ENCODE measurements at regions of chr2 and their contacts with region 1.

Region 1: GRCh38 chr2:196225213-196225612 is 53.8 kb upstream of the STK17B start:
- DNase-seq: no peak
- ATAC-seq: no peak
- H3K4me3 ChIP-seq: no peak overlapping the region
- H3K4me3 Mint-ChIP-seq: peak overlapping the region in 3 of 10 donors; percentile 17 to 37 (median 17)
- H3K27ac ChIP-seq: no peak overlapping the region
- H3K27ac Mint-ChIP-seq: peak overlapping the region in 7 of 9 donors; percentile 14 to 97 (median 50)
- H3K4me1 ChIP-seq: peaks cover 13 to 70% of the 10 kb centered on the region in 2 donors
- H3K4me1 Mint-ChIP-seq: peaks cover 48 to 88% (median 85%) of the 10 kb centered on the region in 7 donors
- H3K27me3 ChIP-seq: no peaks in the 10 kb centered on the region
- H3K27me3 Mint-ChIP-seq: no peaks in the 10 kb centered on the region

Region 2: GRCh38 chr2:196076778-196077568 is 148.2 kb before region 1 on chr2:
- CTCF ChIA-PET with region 1: interaction called, 110 read pairs
- POLR2A ChIA-PET with region 1: interaction called, 56 read pairs
- intact Hi-C with region 1: loop called in 1 of 2 experiments (anchors 1 kb)
- DNase-seq: no peak
- ATAC-seq: no peak
- H3K4me3 ChIP-seq: no peak overlapping the region
- H3K4me3 Mint-ChIP-seq: no peak overlapping the region
- H3K27ac ChIP-seq: no peak overlapping the region
- H3K27ac Mint-ChIP-seq: no peak overlapping the region
- H3K4me1 ChIP-seq: peaks cover 9 to 13% of the 10 kb centered on the region in 2 donors
- H3K4me1 Mint-ChIP-seq: peaks cover 10 to 34% (median 25%) of the 10 kb centered on the region in 7 donors
- H3K27me3 ChIP-seq: no peaks in the 10 kb centered on the region
- H3K27me3 Mint-ChIP-seq: no peaks in the 10 kb centered on the region

Region 3: GRCh38 chr2:196182439-196183171 is 42.6 kb before region 1 on chr2:
- CTCF ChIA-PET with region 1: interaction called, 22 read pairs
- POLR2A ChIA-PET with region 1: interaction called, 359 read pairs
- intact Hi-C with region 1: no loop called
- DNase-seq: peak in 1 of 9 donors; percentile 48
- ATAC-seq: peak; percentile 39
- H3K4me3 ChIP-seq: peak overlapping the region; percentile 34
- H3K4me3 Mint-ChIP-seq: peak overlapping the region; percentile 27 to 80 (median 70)
- H3K27ac ChIP-seq: peak overlapping the region; percentile 72
- H3K27ac Mint-ChIP-seq: peak overlapping the region; percentile 89 to 97 (median 93)
- H3K4me1 ChIP-seq: peaks cover 69 to 76% of the 10 kb centered on the region in 2 donors
- H3K4me1 Mint-ChIP-seq: peaks cover 55 to 98% (median 85%) of the 10 kb centered on the region in 7 donors
- H3K27me3 ChIP-seq: no peaks in the 10 kb centered on the region
- H3K27me3 Mint-ChIP-seq: no peaks in the 10 kb centered on the region

Region 4: DNA sequence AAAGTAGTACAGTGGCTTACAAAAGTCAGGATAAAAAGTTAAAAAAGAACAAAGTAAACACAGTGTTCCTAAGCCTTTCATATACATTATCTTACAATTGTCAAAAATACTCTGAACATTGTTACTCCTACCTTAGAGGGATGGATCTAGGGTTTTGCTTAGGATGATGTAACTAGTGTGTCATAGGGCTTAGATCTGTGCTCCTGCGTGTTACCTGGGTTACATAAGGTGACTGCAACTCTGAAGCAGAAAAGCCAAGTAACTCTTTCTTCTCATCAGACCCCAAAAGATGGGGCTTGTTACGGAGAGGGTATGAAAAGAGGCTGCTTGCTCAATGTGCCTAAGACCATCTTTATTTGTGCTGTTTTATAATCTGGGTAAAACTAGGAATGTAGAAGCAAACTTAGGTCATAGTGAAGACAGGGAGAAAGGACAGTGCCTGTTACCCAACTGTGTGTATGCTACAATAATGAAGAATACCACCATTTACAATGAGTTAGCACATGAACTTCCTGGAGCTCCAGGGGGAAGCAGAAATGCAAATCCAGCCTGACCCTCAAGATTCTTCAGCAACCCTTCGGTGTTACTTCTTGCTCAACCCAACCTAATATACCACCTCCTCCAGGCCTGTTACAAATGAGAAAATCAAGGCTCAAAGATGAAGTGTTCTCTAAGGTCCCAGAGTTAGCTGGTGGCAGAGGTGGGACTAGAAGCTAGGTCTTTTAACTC is 11.8 kb before region 1 on chr2:
- CTCF ChIA-PET with region 1: interaction called, 16 read pairs
- POLR2A ChIA-PET with region 1: interaction called, 28 read pairs
- intact Hi-C with region 1: loop called (anchors 1 kb)
- DNase-seq: peak in 7 of 9 donors; percentile 29 to 77 (median 58)
- ATAC-seq: peak; percentile 36
- H3K4me3 ChIP-seq: no peak overlapping the region
- H3K4me3 Mint-ChIP-seq: peak overlapping the region in 9 of 10 donors; percentile 0 to 94 (median 61)
- H3K27ac ChIP-seq: peak overlapping the region; percentile 78
- H3K27ac Mint-ChIP-seq: peak overlapping the region in 8 of 9 donors; percentile 95 to 100 (median 98)
- H3K4me1 ChIP-seq: peaks cover 14 to 57% of the 10 kb centered on the region in 2 donors
- H3K4me1 Mint-ChIP-seq: peaks cover 51 to 96% (median 94%) of the 10 kb centered on the region in 7 donors
- H3K27me3 ChIP-seq: no peaks in the 10 kb centered on the region
- H3K27me3 Mint-ChIP-seq: no peaks in the 10 kb centered on the region

Region 5: DNA sequence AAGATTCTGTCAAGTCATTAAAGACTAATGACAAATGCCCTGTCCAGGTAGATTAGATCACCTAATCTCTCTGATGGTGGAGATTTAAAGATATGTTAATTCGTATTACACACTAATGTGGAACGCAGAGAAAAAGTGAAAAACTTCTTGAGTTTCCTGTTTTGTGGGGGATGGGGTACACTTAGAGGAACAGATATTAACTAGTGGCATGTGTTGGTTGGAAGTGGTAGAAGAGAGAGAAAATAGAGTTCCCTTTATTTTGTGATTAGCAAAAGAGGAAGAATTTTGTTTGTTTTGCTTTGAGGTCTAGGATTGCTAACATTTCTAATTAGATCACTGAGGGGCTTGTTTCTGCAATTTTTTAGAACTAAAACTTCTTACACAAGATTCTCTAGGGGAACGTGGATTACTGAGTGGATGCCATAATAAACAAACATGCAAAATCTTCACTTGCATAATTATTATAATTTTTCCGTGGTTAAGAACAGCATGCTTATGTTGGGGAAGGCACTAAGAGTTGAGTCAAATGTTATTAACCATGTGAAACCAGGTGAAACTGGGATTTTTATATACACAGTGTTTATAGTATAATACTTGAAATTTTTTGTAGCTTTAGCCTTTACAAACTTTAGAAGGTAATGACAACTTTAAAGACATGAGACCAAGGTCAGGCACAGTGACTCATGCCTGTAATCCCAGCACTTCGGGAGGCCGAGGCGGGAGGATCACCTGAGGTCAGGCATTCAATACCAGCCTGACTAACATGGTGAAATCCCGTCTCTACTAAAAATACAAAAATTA is 43.5 kb after region 1 on chr2:
- CTCF ChIA-PET with region 1: interaction called, 6 read pairs
- POLR2A ChIA-PET with region 1: interaction called, 40 read pairs
- intact Hi-C with region 1: no loop called
- DNase-seq: peak in 5 of 9 donors; percentile 14 to 47 (median 30)
- ATAC-seq: peak; percentile 89
- H3K4me3 ChIP-seq: peak overlapping the region; percentile 33
- H3K4me3 Mint-ChIP-seq: peak overlapping the region; percentile 31 to 93 (median 69)
- H3K27ac ChIP-seq: peak overlapping the region; percentile 63
- H3K27ac Mint-ChIP-seq: peak overlapping the region; percentile 44 to 98 (median 88)
- H3K4me1 ChIP-seq: peaks cover 27 to 53% of the 10 kb centered on the region in 2 donors
- H3K4me1 Mint-ChIP-seq: peaks cover 31 to 72% (median 66%) of the 10 kb centered on the region in 7 donors
- H3K27me3 ChIP-seq: no peaks in the 10 kb centered on the region
- H3K27me3 Mint-ChIP-seq: no peaks in the 10 kb centered on the region

Region 6: DNA sequence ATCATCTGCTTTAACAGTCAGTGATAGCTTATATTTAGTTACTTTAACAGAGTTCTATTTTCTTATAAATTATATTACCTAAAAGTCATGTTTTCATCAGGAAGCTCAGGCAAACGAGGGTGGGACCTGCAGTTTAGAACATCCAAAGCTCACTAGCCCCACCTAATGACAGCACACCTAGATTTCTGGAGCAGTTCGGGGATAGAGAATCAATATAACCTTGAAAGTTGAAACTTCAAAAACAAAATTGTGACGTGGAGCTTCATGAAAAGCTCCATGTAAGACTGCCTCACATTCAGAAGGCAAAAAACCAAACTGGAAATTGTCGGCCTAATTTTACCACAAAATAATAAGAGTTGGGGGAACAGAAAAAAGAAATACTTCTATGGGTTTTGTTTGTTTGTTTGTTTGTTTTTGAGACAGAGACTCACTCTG is 228.4 kb after region 1 on chr2:
- CTCF ChIA-PET with region 1: no interaction called
- POLR2A ChIA-PET with region 1: no interaction called
- intact Hi-C with region 1: loop called in 1 of 2 experiments (anchors 5 kb)
- DNase-seq: peak in 7 of 9 donors; percentile 2 to 39 (median 19)
- ATAC-seq: peak; percentile 60
- H3K4me3 ChIP-seq: no peak overlapping the region
- H3K4me3 Mint-ChIP-seq: no peak overlapping the region
- H3K27ac ChIP-seq: no peak overlapping the region
- H3K27ac Mint-ChIP-seq: no peak overlapping the region
- H3K4me1 ChIP-seq: no peaks in the 10 kb centered on the region
- H3K4me1 Mint-ChIP-seq: peaks cover 0 to 6% (median 0%) of the 10 kb centered on the region in 7 donors
- H3K27me3 ChIP-seq: peaks cover 0 to 6% of the 10 kb centered on the region in 2 donors
- H3K27me3 Mint-ChIP-seq: peaks cover 25 to 42% (median 31%) of the 10 kb centered on the region in 5 donors

Measured in naive thymus-derived CD4-positive, alpha-beta T cell (primary cell).